Mammary epithelial cell (primary cell): ENCODE measurements at regions of chr6 and their contacts with region 1.

Region 1: DNA sequence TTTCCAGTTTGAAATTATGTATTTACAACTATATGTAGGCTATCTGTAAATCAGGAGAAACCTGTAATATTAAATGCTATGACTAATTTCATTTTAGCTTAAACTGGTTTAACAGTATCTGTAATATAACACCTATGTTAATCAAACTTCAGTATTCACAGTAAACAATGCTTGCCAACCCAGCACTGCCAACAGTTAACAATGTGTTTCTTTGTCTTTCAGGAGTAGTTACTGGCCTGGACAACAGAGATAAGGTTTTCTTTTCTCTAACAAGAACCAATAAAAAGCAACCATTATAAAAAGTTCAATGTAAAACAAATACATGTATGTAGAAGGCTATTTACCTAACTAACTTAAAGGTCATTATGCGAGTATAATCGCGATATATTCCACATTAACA is 158.8 kb downstream of the CDK19 start:
- DNase-seq: peak; percentile 73
- H3K4me3 ChIP-seq: no peak overlapping the region
- H3K27ac ChIP-seq: peak overlapping the region; percentile 30
- H3K4me1 ChIP-seq: peaks cover 24% of the 10 kb centered on the region
- H3K27me3 ChIP-seq: no peaks in the 10 kb centered on the region
- CTCF ChIP-seq: no peak

Region 2: DNA sequence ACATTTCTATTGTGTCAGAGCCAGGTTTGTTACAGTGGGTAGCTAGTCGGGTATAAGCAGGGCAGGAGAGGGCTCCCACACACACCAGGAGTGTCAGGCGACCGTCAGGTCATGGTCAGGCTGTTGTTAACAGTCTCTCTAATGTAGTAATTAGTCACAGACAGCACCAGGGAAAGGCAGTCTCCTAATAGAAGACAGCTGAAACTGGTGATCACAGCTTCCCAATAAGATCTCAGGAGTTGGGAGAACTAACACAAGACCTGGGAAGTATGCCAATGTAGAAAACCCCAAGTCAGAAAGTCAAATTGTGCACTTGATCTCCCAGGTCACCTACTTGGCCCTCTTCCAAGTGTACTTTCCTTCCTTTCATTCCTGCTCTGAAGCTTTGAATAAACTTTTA is 731.4 kb before region 1 on chr6:
- CTCF ChIA-PET with region 1: no interaction called
- dilution Hi-C with region 1: no loop called
- in situ Hi-C with region 1: no loop called
- intact Hi-C with region 1: no loop called
- DNase-seq: peak; percentile 20
- H3K4me3 ChIP-seq: no peak overlapping the region
- H3K27ac ChIP-seq: no peak overlapping the region
- H3K4me1 ChIP-seq: no peaks in the 10 kb centered on the region
- H3K27me3 ChIP-seq: peaks cover 4% of the 10 kb centered on the region
- CTCF ChIP-seq: no peak

Region 3: DNA sequence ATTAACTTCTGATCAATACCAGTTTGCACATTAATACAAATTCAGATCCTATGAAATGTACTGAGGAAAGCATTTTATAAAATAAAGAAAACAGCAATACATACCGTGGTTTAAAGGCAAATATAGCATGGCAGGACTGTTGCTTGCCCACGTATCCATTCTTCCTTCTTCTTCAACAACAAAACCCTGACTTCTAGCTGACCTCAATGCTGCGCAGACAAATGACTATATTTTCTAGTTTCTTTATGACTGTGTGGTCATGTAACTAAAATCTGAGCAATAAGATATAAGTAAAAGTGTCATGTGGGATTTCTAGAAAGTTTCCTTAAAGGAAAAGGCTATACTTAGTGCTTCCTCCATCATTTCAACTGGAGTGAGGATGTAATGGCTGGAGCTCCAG is 391.2 kb before region 1 on chr6:
- CTCF ChIA-PET with region 1: no interaction called
- dilution Hi-C with region 1: no loop called
- in situ Hi-C with region 1: no loop called
- intact Hi-C with region 1: no loop called
- DNase-seq: no peak
- H3K4me3 ChIP-seq: no peak overlapping the region
- H3K27ac ChIP-seq: no peak overlapping the region
- H3K4me1 ChIP-seq: no peaks in the 10 kb centered on the region
- H3K27me3 ChIP-seq: peaks cover 4% of the 10 kb centered on the region
- CTCF ChIP-seq: no peak

Region 4: GRCh38 chr6:110589865-110590513 is 66.5 kb before region 1 on chr6:
- CTCF ChIA-PET with region 1: no interaction called
- dilution Hi-C with region 1: loop called (anchors 5 kb)
- in situ Hi-C with region 1: no loop called
- intact Hi-C with region 1: no loop called
- DNase-seq: no peak
- H3K4me3 ChIP-seq: no peak overlapping the region
- H3K27ac ChIP-seq: no peak overlapping the region
- H3K4me1 ChIP-seq: no peaks in the 10 kb centered on the region
- H3K27me3 ChIP-seq: no peaks in the 10 kb centered on the region
- CTCF ChIP-seq: no peak